Activated CD4-positive, alpha-beta T cell treated with anti-CD3 and anti-CD28 coated beads, Interleukin-2, amount 10 ng/mL, durations not matched to agents 24 days and 14 days (primary cell): ENCODE measurements at regions of chr2 and their contacts with region 1.

Region 1: GRCh38 chr2:205680067-205680466 is 2.2 kb upstream of the NRP2 start:
- DNase-seq: peak; percentile 88
- H3K4me3 Mint-ChIP-seq: no peak overlapping the region
- H3K27ac Mint-ChIP-seq: peak overlapping the region; percentile 14
- H3K4me1 Mint-ChIP-seq: peaks cover 48% of the 10 kb centered on the region
- H3K27me3 Mint-ChIP-seq: peaks cover 35% of the 10 kb centered on the region

Region 2: DNA sequence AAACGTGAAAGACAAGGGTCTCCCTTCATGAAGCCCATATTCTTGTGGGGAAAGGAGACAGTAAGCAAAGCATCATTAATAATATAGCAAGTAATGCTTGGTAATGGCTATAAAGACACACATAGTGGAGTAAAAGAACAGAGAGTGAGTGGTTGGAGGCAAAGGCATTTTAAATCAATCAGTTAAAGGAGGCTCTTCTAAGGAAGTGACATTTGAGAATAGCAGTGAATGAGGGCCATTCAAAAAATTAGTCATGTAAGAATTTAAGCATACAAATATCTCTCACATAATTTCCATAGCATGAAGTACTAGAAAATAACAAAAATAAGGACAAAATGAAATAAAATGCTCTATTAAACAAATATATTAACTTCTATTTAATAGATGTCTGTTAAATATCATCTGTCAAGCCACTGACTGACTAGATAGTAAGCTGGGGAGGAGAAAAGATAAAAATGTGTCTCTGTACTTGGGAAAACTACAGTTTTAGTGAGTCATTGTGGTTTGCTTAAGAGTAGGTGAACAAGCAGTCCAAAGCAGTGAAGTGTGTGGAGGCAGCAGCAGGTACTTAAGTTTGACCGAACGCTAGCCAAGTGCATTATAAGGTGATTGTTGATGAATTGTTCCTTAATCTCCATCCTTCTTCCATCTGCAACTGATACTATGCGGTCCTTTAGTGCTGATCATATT is 974.7 kb before region 1 on chr2:
- intact Hi-C with region 1: loop called (anchors 10 kb)
- DNase-seq: no peak
- H3K4me3 Mint-ChIP-seq: no peak overlapping the region
- H3K27ac Mint-ChIP-seq: no peak overlapping the region
- H3K4me1 Mint-ChIP-seq: no peaks in the 10 kb centered on the region
- H3K27me3 Mint-ChIP-seq: peaks cover 17% of the 10 kb centered on the region

Region 3: DNA sequence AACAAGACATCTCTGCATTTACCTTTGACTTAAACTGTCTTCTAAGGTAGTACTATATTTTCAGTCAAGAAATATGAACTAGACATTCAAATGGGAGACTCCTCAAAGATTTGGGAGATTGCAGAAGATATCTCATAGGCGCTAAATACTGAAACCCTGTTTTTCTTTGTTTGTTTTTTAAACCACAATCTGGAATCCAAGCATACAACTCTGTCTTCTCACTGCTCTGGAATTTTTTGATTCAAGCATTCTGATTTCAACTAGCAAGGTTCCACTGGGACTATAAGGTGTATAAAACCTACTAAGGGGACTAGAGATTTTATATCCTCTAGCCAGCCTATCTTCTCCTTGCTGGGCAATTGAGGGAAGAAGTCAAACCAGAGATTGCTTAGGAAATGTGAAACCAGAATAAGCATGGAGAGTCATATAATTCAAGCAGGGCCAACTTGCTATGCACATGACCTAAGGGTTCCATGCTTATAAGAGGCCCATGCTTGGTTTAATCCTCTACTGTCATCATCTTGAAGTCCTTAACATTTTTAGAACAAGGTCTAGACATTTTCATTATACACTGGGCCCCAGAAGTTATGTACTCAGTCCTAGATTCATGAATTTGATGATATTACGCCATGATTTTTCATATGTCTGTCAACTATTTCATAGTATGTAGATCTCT is 729.3 kb before region 1 on chr2:
- intact Hi-C with region 1: loop called (anchors 2 kb)
- DNase-seq: no peak
- H3K4me3 Mint-ChIP-seq: no peak overlapping the region
- H3K27ac Mint-ChIP-seq: no peak overlapping the region
- H3K4me1 Mint-ChIP-seq: peaks cover 50% of the 10 kb centered on the region
- H3K27me3 Mint-ChIP-seq: no peaks in the 10 kb centered on the region

Region 4: GRCh38 chr2:205323929-205324328 is 356.1 kb before region 1 on chr2:
- intact Hi-C with region 1: loop called (anchors 2 kb)
- DNase-seq: no peak
- H3K4me3 Mint-ChIP-seq: no peak overlapping the region
- H3K27ac Mint-ChIP-seq: no peak overlapping the region
- H3K4me1 Mint-ChIP-seq: no peaks in the 10 kb centered on the region
- H3K27me3 Mint-ChIP-seq: peaks cover 12% of the 10 kb centered on the region

Region 5: GRCh38 chr2:205543937-205544702 is 135.9 kb before region 1 on chr2:
- intact Hi-C with region 1: loop called (anchors 5 kb)
- DNase-seq: no peak
- H3K4me3 Mint-ChIP-seq: no peak overlapping the region
- H3K27ac Mint-ChIP-seq: peak overlapping the region; percentile 71
- H3K4me1 Mint-ChIP-seq: peaks cover 16% of the 10 kb centered on the region
- H3K27me3 Mint-ChIP-seq: peaks cover 5% of the 10 kb centered on the region

Region 6: DNA sequence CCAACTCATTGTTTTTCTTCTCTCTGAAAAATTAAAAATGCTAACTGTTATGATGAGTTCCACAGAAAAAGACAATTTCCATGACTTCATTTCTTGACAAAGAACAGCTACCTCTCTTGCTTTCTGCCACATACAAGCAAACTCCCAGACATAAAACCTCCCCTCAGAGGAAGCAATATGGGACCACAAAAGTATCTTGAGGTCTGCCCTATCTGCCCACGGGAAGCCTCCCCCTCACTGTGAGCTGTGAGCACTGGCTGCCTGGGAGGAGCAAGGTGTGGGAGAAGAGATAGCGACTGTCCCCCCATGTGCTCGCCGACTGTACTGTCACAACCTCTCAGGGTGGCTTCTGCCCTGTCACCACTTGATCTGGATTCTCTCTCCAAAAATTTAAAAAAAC is 67.4 kb before region 1 on chr2:
- intact Hi-C with region 1: loop called (anchors 1 kb)
- DNase-seq: peak; percentile 80
- H3K4me3 Mint-ChIP-seq: peak overlapping the region; percentile 50
- H3K27ac Mint-ChIP-seq: peak overlapping the region; percentile 84
- H3K4me1 Mint-ChIP-seq: peaks cover 45% of the 10 kb centered on the region
- H3K27me3 Mint-ChIP-seq: peaks cover 5% of the 10 kb centered on the region

Region 7: DNA sequence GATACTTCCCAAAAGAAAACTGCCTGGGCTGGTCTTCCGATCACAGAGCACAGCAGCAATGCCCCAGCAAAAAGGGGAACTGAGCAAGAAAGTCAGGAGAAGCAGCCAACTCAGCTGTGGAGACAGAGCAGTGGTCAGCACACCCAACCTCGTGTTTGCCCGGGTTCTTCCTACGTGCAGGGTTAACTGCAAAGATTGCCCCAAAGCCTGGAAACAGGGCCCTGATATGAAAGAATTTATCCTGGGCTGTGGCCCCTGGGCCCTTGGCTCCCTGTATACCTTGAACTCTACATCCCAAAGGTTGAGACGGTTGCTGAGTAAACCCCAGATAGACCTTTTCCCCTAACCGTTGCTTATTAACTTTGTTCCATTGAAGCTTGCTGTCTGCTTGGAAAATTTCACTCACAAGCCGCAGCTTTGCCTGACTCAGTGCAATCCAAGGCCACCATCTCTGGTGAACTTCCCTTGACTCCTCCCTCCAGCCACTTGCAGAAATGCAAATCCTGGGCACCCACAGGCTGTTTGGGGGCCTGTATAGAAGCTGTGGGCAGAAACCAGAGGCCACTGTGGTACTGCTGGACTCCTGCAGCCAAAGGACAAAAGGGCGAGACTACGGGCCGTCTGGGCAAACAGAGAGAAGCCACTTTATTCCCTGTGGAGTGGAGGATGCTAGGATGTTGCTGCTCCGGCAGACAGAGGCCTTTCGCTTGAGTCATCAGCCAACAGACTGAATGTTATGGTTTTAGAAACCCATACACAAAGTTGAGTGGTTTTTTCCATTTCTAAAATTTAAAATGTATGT is 20.5 kb after region 1 on chr2:
- intact Hi-C with region 1: no loop called
- DNase-seq: no peak
- H3K4me3 Mint-ChIP-seq: peak overlapping the region; percentile 63
- H3K27ac Mint-ChIP-seq: peak overlapping the region; percentile 95
- H3K4me1 Mint-ChIP-seq: peaks cover 43% of the 10 kb centered on the region
- H3K27me3 Mint-ChIP-seq: no peaks in the 10 kb centered on the region

Region 8: GRCh38 chr2:205885492-205886099 is 205.5 kb after region 1 on chr2:
- intact Hi-C with region 1: loop called (anchors 5 kb)
- DNase-seq: peak; percentile 90
- H3K4me3 Mint-ChIP-seq: no peak overlapping the region
- H3K27ac Mint-ChIP-seq: no peak overlapping the region
- H3K4me1 Mint-ChIP-seq: peaks cover 2% of the 10 kb centered on the region
- H3K27me3 Mint-ChIP-seq: peaks cover 9% of the 10 kb centered on the region